Common myeloid progenitor, CD34-positive (primary cell): ENCODE measurements at regions of chr5 and their contacts with region 1.

Region 1: GRCh38 chr5:82656341-82656761 is 378.2 kb upstream of the RPS23 start:
- DNase-seq: peak in 2 of 3 donors; percentile 34 to 45
- H3K4me3 ChIP-seq: no peak overlapping the region
- H3K27ac ChIP-seq: no peak overlapping the region
- H3K4me1 ChIP-seq: peaks cover 3 to 15% (median 13%) of the 10 kb centered on the region in 4 experiments
- H3K27me3 ChIP-seq: no peaks in the 10 kb centered on the region

Region 2: DNA sequence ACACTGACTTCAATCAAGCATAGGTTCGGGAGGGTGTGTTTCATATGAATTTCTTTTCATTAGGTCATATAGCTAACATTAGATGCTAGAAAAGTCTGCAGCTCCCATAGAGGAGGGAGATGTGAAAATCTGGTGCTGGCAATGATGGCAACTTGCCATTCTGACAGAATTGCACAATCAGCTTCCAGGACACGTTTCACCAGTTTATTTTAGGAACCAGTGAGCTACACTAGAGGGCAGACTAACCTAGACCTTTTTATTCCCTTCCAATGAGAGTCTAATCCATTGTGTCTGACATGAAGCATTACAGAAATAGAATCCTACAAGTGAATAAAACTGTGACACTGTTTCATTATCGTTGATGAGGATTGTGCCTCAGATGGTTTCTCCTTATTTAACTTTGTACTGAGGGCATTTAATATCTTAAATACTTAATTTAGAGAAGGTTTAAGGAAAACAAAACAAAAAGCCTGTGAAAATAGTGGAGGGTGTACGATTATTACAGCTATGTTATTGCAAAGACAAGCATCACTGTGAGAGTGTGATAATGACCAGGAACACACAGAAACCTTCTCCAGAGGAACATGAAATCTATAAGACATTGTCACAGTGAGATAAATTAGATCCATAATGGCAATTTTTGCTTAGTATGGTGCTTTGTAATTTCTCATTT is 14.9 kb before region 1 on chr5:
- CTCF ChIA-PET with region 1: interaction called, 14 read pairs
- POLR2A ChIA-PET with region 1: no interaction called
- DNase-seq: peak; percentile 74 to 90 (median 84)
- H3K4me3 ChIP-seq: no peak overlapping the region
- H3K27ac ChIP-seq: no peak overlapping the region
- H3K4me1 ChIP-seq: peaks cover 0 to 10% (median 0%) of the 10 kb centered on the region in 4 experiments
- H3K27me3 ChIP-seq: no peaks in the 10 kb centered on the region